ENCODE measurements at regions of chr15 and their contacts with region 1.

Region 1: GRCh38 chr15:77543159-77543882 is 89.4 kb downstream of the LINGO1 start:
- DNase-seq: peak; percentile 64
- H3K4me3 ChIP-seq: peak overlapping the region; percentile 54
- H3K27ac ChIP-seq: peak overlapping the region; percentile 11
- H3K27me3 ChIP-seq: peaks cover 3% of the 10 kb centered on the region
- CTCF ChIP-seq: peak; percentile 99

Region 2: GRCh38 chr15:77024271-77025082 is 518.8 kb before region 1 on chr15:
- CTCF ChIA-PET with region 1: interaction called, 16 read pairs
- POLR2A ChIA-PET with region 1: no interaction called
- DNase-seq: no peak
- H3K4me3 ChIP-seq: no peak overlapping the region
- H3K27ac ChIP-seq: no peak overlapping the region
- H3K27me3 ChIP-seq: no peaks in the 10 kb centered on the region
- CTCF ChIP-seq: peak; percentile 91

Region 3: DNA sequence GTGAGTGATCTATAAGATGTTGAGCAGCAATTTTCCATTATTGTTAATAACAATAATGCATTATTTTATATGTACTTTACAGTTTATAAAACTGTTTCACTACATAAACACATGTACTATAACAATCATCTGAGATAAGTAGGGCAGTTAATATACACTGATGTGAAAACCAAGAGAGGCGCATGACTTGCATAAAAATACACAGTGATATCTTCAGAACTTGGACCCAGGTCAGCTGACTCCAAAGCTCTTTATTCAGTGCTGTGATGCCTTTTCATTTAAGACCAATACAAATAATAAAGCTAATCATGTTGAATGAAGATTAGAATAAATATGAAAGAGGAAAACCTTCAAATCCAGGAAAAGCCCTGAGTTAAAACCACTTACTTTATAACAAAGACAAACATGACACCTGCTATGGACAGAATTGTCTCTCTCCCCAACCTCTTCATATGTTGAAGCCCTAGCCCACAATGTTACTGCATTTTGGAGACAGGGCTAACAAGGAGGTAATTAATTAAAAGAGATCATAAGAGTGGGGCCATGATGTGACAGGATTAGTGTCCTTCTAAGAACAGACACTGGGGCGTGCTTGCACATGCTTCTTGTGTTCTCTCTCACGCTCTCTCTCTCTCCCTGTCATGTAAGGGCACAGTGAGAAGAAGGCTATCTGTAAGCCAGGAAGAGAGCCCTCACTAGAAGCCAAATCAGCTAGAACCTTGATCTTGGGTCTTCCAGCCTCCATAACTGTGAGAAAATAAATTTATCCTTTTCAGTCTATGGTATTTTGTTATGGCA is 416.6 kb before region 1 on chr15:
- CTCF ChIA-PET with region 1: interaction called, 95 read pairs
- POLR2A ChIA-PET with region 1: no interaction called
- DNase-seq: no peak
- H3K4me3 ChIP-seq: no peak overlapping the region
- H3K27ac ChIP-seq: no peak overlapping the region
- H3K27me3 ChIP-seq: no peaks in the 10 kb centered on the region
- CTCF ChIP-seq: no peak

Region 4: DNA sequence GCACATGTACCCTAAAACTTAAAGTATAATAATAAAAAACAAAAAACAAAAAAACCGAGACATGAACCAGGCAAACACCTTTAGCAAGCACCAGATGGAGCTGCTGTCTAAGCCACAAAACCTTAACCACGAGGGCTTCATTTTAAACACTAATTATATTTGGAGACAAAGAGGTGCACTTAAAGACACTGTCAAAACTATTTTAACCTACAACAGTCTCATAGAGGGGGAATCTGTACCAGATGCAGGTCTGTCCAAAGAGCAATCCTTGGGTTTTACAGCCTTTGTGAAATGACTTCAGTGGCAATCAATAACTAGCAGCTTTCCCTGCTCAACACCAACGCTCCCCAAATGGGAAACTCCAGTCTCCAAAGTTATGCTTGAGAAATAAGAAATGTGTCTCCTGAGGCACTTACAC is 356.7 kb before region 1 on chr15:
- CTCF ChIA-PET with region 1: interaction called, 61 read pairs
- POLR2A ChIA-PET with region 1: no interaction called
- DNase-seq: peak; percentile 8
- H3K4me3 ChIP-seq: no peak overlapping the region
- H3K27ac ChIP-seq: no peak overlapping the region
- H3K27me3 ChIP-seq: no peaks in the 10 kb centered on the region
- CTCF ChIP-seq: peak; percentile 69

Region 5: DNA sequence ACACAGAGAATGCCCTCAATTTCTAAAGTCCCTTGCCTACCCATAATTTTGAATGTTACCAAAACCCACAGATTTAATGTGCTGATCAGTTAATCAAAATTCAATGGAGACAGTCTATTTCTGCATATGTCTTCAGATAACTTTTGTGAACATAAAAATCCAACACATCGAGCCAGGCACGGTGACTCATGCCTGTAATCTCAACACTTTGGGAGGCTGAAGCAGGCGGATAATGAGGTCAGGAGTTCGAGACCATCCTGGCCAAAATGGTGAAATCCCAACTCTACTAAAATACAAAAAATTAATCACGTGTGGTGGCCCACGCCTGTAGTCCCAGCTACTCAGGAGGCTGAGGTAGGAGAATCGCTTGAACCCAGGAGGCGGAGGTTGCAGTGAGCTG is 172.7 kb before region 1 on chr15:
- CTCF ChIA-PET with region 1: no interaction called
- POLR2A ChIA-PET with region 1: no interaction called
- DNase-seq: no peak
- H3K4me3 ChIP-seq: no peak overlapping the region
- H3K27ac ChIP-seq: no peak overlapping the region
- H3K27me3 ChIP-seq: no peaks in the 10 kb centered on the region
- CTCF ChIP-seq: no peak

Region 6: GRCh38 chr15:77496710-77497103 is 46.6 kb before region 1 on chr15:
- CTCF ChIA-PET with region 1: interaction called, 47 read pairs
- POLR2A ChIA-PET with region 1: interaction called, 3 read pairs
- DNase-seq: peak; percentile 95
- H3K4me3 ChIP-seq: peak overlapping the region; percentile 39
- H3K27ac ChIP-seq: peak overlapping the region; percentile 91
- H3K27me3 ChIP-seq: no peaks in the 10 kb centered on the region
- CTCF ChIP-seq: peak; percentile 98

Region 7: DNA sequence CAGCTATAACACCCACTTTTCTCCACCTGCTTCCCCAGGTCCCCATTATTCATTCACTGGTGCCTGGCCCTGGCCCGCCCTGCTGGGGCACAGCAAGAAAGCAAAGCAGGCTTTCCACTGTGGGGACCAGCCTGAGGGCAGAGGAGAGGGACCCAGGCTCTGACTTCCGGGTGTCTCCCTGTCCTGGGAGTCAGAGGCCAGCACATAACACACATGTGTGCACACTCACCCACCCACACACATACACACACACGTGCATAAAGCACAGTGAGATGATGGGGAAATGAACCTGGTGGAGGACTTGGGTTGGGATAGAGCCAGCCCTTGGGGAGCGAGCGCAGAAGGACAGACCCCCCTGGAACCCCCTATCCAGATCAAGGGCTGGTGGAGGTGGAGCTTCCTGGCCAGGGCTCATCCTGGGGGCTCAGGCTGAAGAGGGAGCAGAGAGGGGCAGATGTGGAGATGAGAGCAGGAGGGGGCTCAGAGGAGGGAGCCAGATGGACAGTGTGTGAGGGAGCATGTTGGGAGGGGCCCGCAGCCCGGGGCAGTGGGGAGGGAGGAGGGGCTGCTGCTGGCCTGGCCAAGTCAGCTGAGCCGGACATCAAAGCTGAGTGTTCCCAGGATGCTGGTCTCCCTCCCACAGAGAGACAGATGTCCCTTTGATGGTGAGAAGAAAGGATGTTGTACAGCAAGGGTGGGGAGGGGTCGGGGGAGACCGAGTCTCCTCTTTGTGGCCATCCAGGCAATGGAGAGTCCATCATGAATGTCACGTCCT is 11.2 kb after region 1 on chr15:
- CTCF ChIA-PET with region 1: interaction called, 10 read pairs
- POLR2A ChIA-PET with region 1: no interaction called
- DNase-seq: no peak
- H3K4me3 ChIP-seq: no peak overlapping the region
- H3K27ac ChIP-seq: no peak overlapping the region
- H3K27me3 ChIP-seq: peaks cover 6% of the 10 kb centered on the region
- CTCF ChIP-seq: no peak

Measured in AG04450 (cell line).